CD4-positive, alpha-beta T cell (primary cell): ENCODE measurements at regions of chr7 and their contacts with region 1.

Region 1: DNA sequence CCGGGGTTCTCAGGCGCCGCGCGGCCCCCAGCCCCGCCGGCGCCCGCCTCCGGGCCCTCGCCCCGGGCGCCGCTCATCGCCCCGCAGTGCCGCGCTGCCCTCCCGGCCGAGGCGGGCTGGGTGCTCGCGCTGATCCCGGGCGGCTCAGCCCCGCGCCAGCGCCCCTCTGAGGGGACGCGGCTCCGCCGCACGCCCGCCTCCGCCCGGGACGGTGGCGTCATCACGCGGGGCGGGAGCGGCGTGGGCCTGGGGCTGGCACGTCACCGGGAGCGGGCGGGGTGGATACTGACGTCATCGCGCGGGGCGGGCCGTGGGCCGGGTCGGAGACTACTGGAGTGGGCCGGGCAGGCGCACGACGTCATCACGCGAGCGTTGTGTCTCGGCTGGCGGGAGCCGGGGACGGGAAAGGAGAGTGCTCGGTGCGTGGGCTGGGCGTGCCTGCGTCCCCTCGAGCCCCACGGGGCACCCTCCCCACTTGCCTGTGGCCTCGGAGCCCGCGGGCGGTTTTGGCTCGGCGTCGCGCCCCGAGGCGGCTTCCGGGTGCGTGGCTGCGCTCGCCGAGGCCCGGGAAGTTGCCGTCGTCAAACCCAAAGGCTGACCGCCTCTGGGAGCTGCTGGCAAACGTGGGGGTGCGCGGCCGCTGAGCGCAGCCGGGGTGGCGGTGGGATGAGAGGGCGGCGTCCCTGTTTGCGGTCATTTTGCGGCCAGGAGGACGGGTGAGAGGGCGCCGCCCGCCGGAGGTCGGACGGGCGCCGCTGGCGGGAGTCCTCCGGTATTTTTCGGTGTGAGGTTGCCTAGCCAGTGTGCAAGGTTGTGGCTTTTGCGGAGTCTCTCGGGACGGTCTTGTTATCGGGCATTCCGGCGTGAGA is at the start of gene ESYT2:
- DNase-seq: peak; percentile 98 to 100 (median 100)
- ATAC-seq: peak; percentile 77
- H3K4me3 ChIP-seq: peak within 1 kb of the TSS; percentile 83
- H3K4me3 Mint-ChIP-seq: peak within 1 kb of the TSS; percentile 93
- H3K27ac ChIP-seq: peak within 1 kb of the TSS; percentile 91 to 95
- H3K27ac Mint-ChIP-seq: peak within 1 kb of the TSS; percentile 92
- H3K4me1 ChIP-seq: peaks cover 33% of the 10 kb centered on the region
- H3K4me1 Mint-ChIP-seq: peaks cover 34% of the 10 kb centered on the region
- H3K27me3 ChIP-seq: no peaks in the 10 kb centered on the region
- H3K27me3 Mint-ChIP-seq: no peaks in the 10 kb centered on the region
- CTCF ChIP-seq: no peak
- total RNA-seq, gene ESYT2: 106 to 112 TPM

Region 2: GRCh38 chr7:158704704-158705468 is 124.7 kb before region 1 on chr7 and contains the start of gene NCAPG2:
- CTCF ChIA-PET with region 1: interaction called, 8 read pairs
- POLR2A ChIA-PET with region 1: interaction called, 13 read pairs
- intact Hi-C with region 1: loop called (anchors 1 to 10 kb)
- DNase-seq: peak; percentile 97 to 100 (median 98)
- ATAC-seq: peak; percentile 98
- H3K4me3 ChIP-seq: peak within 1 kb of the TSS; percentile 97
- H3K4me3 Mint-ChIP-seq: peak within 1 kb of the TSS; percentile 96
- H3K27ac ChIP-seq: peak within 1 kb of the TSS; percentile 52 to 70
- H3K27ac Mint-ChIP-seq: peak within 1 kb of the TSS; percentile 62
- H3K4me1 ChIP-seq: peaks cover 23% of the 10 kb centered on the region
- H3K4me1 Mint-ChIP-seq: peaks cover 24% of the 10 kb centered on the region
- H3K27me3 ChIP-seq: no peaks in the 10 kb centered on the region
- H3K27me3 Mint-ChIP-seq: no peaks in the 10 kb centered on the region
- CTCF ChIP-seq: peak; percentile 16
- total RNA-seq, gene NCAPG2: 9.9 to 11.8 TPM

Region 3: DNA sequence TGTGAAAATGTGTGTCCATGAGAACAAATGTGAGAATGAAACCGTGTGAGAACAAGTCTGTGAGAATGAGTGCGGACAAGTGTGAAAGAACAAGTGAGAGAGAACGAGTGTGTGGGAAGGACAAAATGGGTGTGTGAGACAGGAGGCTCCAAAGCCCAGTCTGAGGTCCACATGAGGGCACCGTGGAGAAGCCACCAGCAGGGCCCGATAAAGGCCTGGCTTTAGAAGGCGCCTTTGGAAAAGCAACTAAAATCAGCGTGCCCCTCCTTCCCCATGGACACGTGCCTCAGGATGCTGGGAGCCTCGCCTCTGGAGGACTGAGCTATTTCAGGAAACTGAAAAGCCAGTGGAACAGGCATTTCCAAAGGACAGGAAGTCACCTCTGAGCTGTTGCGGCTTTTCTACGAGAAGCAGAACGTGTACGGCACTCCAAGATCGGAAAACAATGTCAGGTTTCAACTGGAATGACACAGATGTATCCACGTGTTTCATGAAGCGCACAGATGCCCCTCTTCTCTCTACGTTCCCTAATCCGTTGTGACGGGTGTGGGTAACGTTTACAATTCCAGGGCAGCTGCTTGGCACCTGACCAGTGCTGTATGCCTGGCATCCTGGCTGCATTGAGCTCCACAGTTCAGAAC is 46.7 kb before region 1 on chr7:
- CTCF ChIA-PET with region 1: interaction called, 7 read pairs
- POLR2A ChIA-PET with region 1: interaction called, 10 read pairs
- intact Hi-C with region 1: loop called in 1 of 2 experiments (anchors 1 kb)
- DNase-seq: peak in 5 of 14 experiments; percentile 13 to 55 (median 28)
- ATAC-seq: peak; percentile 19
- H3K4me3 ChIP-seq: no peak overlapping the region
- H3K4me3 Mint-ChIP-seq: no peak overlapping the region
- H3K27ac ChIP-seq: no peak overlapping the region
- H3K27ac Mint-ChIP-seq: no peak overlapping the region
- H3K4me1 ChIP-seq: peaks cover 29% of the 10 kb centered on the region
- H3K4me1 Mint-ChIP-seq: peaks cover 7% of the 10 kb centered on the region
- H3K27me3 ChIP-seq: no peaks in the 10 kb centered on the region
- H3K27me3 Mint-ChIP-seq: no peaks in the 10 kb centered on the region
- CTCF ChIP-seq: no peak

Region 4: GRCh38 chr7:158811461-158811860 is 18.1 kb before region 1 on chr7:
- CTCF ChIA-PET with region 1: interaction called, 6 read pairs
- POLR2A ChIA-PET with region 1: interaction called, 256 read pairs
- intact Hi-C with region 1: loop called (anchors 1 to 2 kb)
- DNase-seq: peak in 7 of 14 experiments; percentile 33 to 66 (median 49)
- ATAC-seq: peak; percentile 13
- H3K4me3 ChIP-seq: no peak overlapping the region
- H3K4me3 Mint-ChIP-seq: peak overlapping the region; percentile 81
- H3K27ac ChIP-seq: peak overlapping the region; percentile 72 to 86
- H3K27ac Mint-ChIP-seq: peak overlapping the region; percentile 97
- H3K4me1 ChIP-seq: peaks cover 78% of the 10 kb centered on the region
- H3K4me1 Mint-ChIP-seq: peaks cover 94% of the 10 kb centered on the region
- H3K27me3 ChIP-seq: no peaks in the 10 kb centered on the region
- H3K27me3 Mint-ChIP-seq: no peaks in the 10 kb centered on the region
- CTCF ChIP-seq: no peak

Region 5: DNA sequence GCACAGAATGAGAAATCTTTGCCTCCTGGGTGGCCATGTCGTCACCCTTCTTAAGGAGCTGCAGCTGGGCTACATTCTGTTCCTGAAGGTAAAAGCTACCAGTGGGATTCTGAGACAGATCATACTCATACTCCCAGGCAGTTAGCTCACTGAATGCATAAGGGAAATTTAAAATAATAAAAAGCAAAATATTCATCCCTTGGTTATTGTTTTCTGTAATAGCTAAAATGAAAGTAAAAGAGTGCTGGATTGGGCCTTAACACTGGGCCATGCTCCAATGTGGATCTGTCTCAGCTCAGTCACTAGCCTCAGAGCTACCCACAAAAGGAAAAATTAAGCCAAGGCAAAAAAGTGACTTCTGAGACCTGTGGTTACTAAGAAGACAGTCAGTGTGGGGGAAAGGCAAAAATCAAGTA is 17.9 kb after region 1 on chr7:
- CTCF ChIA-PET with region 1: no interaction called
- POLR2A ChIA-PET with region 1: interaction called, 34 read pairs
- intact Hi-C with region 1: no loop called
- DNase-seq: peak in 3 of 14 experiments; percentile 33 to 44 (median 38)
- ATAC-seq: peak; percentile 60
- H3K4me3 ChIP-seq: peak overlapping the region; percentile 43
- H3K4me3 Mint-ChIP-seq: peak overlapping the region; percentile 87
- H3K27ac ChIP-seq: peak overlapping the region; percentile 35 to 53
- H3K27ac Mint-ChIP-seq: peak overlapping the region; percentile 76
- H3K4me1 ChIP-seq: peaks cover 21% of the 10 kb centered on the region
- H3K4me1 Mint-ChIP-seq: peaks cover 31% of the 10 kb centered on the region
- H3K27me3 ChIP-seq: no peaks in the 10 kb centered on the region
- H3K27me3 Mint-ChIP-seq: no peaks in the 10 kb centered on the region
- CTCF ChIP-seq: no peak

Region 6: GRCh38 chr7:158863611-158864506 is 34.3 kb after region 1 on chr7:
- CTCF ChIA-PET with region 1: no interaction called
- POLR2A ChIA-PET with region 1: interaction called, 21 read pairs
- intact Hi-C with region 1: no loop called
- DNase-seq: peak in 8 of 14 experiments; percentile 6 to 63 (median 36)
- ATAC-seq: peak; percentile 76
- H3K4me3 ChIP-seq: peak overlapping the region; percentile 58
- H3K4me3 Mint-ChIP-seq: peak overlapping the region; percentile 98
- H3K27ac ChIP-seq: no peak overlapping the region
- H3K27ac Mint-ChIP-seq: peak overlapping the region; percentile 76
- H3K4me1 ChIP-seq: peaks cover 20% of the 10 kb centered on the region
- H3K4me1 Mint-ChIP-seq: peaks cover 61% of the 10 kb centered on the region
- H3K27me3 ChIP-seq: no peaks in the 10 kb centered on the region
- H3K27me3 Mint-ChIP-seq: no peaks in the 10 kb centered on the region
- CTCF ChIP-seq: no peak